Ascending aorta (tissue), 2 donors: ENCODE measurements at regions of chr5 and their contacts with region 1.

Region 1: GRCh38 chr5:171207256-171207847 is 101.7 kb upstream of the TLX3 start:
- DNase-seq: no peak
- H3K4me3 ChIP-seq: no peak overlapping the region
- H3K27ac ChIP-seq: no peak overlapping the region
- H3K4me1 ChIP-seq: no peaks in the 10 kb centered on the region
- H3K27me3 ChIP-seq: no peaks in the 10 kb centered on the region
- CTCF ChIP-seq: peak in 1 of 3 experiments; percentile 47

Region 2: GRCh38 chr5:171188016-171188415 is 19.3 kb before region 1 on chr5:
- intact Hi-C with region 1: loop called (anchors 1 kb)
- DNase-seq: no peak
- H3K4me3 ChIP-seq: no peak overlapping the region
- H3K27ac ChIP-seq: no peak overlapping the region
- H3K4me1 ChIP-seq: no peaks in the 10 kb centered on the region
- H3K27me3 ChIP-seq: no peaks in the 10 kb centered on the region
- CTCF ChIP-seq: no peak

Region 3: GRCh38 chr5:171336521-171337209 is 129.3 kb after region 1 on chr5:
- intact Hi-C with region 1: loop called (anchors 5 kb)
- DNase-seq: no peak
- H3K4me3 ChIP-seq: peak overlapping the region; percentile 1 to 17
- H3K27ac ChIP-seq: no peak overlapping the region
- H3K4me1 ChIP-seq: no peaks in the 10 kb centered on the region
- H3K27me3 ChIP-seq: no peaks in the 10 kb centered on the region
- CTCF ChIP-seq: peak in 2 of 3 experiments; percentile 26 to 52

Region 4: DNA sequence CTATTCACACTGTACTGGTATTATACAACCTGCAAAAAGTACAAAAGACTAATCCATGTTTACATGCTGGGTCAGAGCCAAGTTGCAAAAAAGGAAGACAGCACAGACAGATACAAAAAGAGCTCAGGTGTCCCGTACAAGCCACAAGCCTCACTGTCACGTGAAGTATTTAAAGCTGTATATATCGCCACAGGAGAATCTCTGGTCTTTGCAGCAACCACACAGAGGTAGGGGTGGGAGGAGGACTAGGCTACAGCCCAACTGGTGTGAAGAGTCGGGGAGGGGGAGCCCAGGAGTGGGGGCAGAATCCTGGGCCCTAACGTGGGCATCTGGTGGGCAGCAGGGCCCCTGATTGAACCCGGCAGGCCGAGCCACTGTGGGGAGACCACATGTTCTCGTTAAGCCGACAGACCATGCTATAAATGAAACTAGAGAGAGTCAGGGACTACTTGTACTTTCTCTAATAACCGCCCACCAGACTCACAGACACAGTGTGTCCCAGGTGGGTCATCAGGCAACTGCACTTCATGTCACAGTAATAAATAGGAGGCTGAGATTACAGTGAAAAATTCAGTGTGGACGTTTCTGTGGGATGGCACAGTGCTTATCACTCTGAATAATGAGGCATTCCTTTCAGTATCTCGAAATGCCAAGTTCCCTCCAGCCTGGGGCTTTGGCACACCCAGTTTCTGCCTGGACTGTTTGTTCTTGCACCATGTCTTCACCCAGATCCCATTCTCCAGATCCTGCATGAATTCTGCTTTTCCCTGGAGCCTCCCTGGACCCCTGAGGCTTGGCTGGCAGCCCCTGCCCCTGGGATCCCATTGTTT is 1326.3 kb after region 1 on chr5:
- intact Hi-C with region 1: no loop called
- DNase-seq: peak in 1 of 2 donors; percentile 53
- H3K4me3 ChIP-seq: no peak overlapping the region
- H3K27ac ChIP-seq: no peak overlapping the region
- H3K4me1 ChIP-seq: no peaks in the 10 kb centered on the region
- H3K27me3 ChIP-seq: no peaks in the 10 kb centered on the region
- CTCF ChIP-seq: no peak